Activated T-helper 1 cell treated with anti-CD3 and anti-CD28 coated beads, Interleukin-12 subunit alpha, Interleukin-12 subunit beta, Interleukin-2, Interleukin-4 antibody, amounts not matched to agents 30 ng/mL and 10 ng/mL and 1 ng/mL, durations not matched to agents 14 hours and 24 hours and 36 hours (primary cell): ENCODE measurements at regions of chr2 and their contacts with region 1.

Region 1: GRCh38 chr2:181104512-181105115 is 124.2 kb downstream of the UBE2E3 start:
- DNase-seq: no peak
- H3K4me3 Mint-ChIP-seq: no peak overlapping the region
- H3K27ac Mint-ChIP-seq: peak overlapping the region; percentile 49
- H3K4me1 Mint-ChIP-seq: peaks cover 50% of the 10 kb centered on the region
- H3K27me3 Mint-ChIP-seq: no peaks in the 10 kb centered on the region

Region 2: GRCh38 chr2:181123798-181124231 is 19.2 kb after region 1 on chr2:
- intact Hi-C with region 1: loop called (anchors 1 kb)
- DNase-seq: peak; percentile 73
- H3K4me3 Mint-ChIP-seq: peak overlapping the region; percentile 78
- H3K27ac Mint-ChIP-seq: peak overlapping the region; percentile 95
- H3K4me1 Mint-ChIP-seq: peaks cover 74% of the 10 kb centered on the region
- H3K27me3 Mint-ChIP-seq: no peaks in the 10 kb centered on the region

Region 3: DNA sequence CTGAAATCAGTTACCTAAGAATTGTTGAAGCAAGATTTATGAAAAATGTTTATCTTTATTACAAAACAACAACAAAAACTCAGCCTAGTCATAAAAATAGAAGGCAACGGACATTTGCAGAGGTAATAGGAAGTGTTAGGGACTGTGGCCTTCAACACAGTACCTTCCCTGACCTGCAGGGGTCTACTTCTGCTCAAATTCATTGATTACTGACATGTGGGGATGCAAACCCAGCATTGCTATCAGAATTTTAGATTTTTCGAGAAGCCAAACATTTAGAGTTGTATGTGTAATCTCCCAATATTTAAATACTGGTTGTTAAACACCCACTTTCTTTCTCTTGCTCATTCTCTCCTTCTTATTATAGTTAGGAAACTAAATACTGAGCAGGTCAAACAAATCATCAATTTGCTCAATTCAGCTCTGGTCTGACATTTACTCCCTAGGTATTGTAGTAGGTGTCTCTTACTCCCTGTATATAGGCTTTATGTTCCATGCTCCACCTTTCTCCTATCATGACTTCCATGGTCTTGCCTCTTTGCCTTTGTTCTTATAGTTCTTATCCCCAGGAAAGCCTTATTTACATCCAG is 74.3 kb after region 1 on chr2:
- intact Hi-C with region 1: loop called (anchors 1 kb)
- DNase-seq: no peak
- H3K4me3 Mint-ChIP-seq: peak overlapping the region; percentile 7
- H3K27ac Mint-ChIP-seq: peak overlapping the region; percentile 57
- H3K4me1 Mint-ChIP-seq: peaks cover 56% of the 10 kb centered on the region
- H3K27me3 Mint-ChIP-seq: no peaks in the 10 kb centered on the region

Region 4: DNA sequence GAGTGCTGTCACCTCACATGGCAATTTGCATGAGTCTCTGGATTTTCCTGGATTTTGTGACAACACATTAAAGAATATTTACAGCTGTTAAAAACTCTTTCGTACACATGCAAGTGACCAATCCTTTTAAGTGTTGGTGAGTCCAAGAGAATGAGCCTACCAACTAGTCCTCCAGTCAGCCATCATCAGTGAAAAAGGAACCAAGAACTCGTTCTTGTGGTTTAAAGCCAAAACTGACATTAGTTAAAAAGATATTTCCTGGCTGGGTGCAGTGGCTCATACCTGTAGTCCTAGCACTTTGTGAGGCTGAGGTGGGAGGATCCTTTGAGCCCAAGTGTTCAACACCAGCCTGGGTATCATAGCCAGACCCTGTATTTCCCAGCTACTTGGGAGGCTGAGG is 137.2 kb after region 1 on chr2:
- intact Hi-C with region 1: no loop called
- DNase-seq: no peak
- H3K4me3 Mint-ChIP-seq: no peak overlapping the region
- H3K27ac Mint-ChIP-seq: no peak overlapping the region
- H3K4me1 Mint-ChIP-seq: peaks cover 30% of the 10 kb centered on the region
- H3K27me3 Mint-ChIP-seq: no peaks in the 10 kb centered on the region

Region 5: DNA sequence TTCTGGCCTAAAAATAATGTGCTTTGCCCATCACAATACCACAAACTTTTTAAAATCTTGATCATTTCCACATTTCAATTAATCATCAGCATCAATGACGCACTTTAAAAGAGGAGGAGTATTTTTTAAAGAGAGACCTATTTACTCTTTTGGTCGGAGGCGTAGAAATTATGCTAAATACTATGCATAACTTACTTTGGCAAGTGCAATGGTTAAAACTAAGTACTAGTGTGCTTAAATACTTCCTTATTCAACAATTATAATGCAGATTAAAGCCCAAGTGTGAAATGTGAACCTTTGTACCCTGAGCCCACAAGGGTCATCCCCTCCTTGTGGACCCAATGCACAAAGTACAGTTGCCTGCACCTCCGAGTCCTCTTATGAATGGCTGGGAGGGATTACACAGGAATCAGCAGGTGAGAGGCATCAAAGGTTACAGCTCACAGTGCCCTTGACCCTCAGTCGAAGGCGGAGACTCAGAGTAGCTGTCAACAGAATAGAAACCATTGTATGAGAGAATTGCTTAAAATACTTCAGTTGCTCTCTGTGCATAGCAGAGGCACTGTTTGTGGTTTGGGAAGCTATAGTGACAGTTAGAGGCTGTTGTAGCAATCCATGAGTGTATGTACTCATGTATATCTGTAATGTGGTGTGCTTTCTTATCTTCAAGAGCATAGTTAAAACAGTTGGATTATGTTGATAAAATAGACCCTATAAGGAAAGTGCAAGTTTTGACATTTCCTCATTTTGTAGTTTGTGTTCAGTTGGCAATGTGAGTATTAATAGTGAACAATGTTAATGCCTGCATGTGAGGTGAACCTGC is 200.9 kb after region 1 on chr2:
- intact Hi-C with region 1: loop called (anchors 1 kb)
- DNase-seq: peak; percentile 62
- H3K4me3 Mint-ChIP-seq: peak overlapping the region; percentile 74
- H3K27ac Mint-ChIP-seq: peak overlapping the region; percentile 96
- H3K4me1 Mint-ChIP-seq: peaks cover 84% of the 10 kb centered on the region
- H3K27me3 Mint-ChIP-seq: no peaks in the 10 kb centered on the region

Region 6: DNA sequence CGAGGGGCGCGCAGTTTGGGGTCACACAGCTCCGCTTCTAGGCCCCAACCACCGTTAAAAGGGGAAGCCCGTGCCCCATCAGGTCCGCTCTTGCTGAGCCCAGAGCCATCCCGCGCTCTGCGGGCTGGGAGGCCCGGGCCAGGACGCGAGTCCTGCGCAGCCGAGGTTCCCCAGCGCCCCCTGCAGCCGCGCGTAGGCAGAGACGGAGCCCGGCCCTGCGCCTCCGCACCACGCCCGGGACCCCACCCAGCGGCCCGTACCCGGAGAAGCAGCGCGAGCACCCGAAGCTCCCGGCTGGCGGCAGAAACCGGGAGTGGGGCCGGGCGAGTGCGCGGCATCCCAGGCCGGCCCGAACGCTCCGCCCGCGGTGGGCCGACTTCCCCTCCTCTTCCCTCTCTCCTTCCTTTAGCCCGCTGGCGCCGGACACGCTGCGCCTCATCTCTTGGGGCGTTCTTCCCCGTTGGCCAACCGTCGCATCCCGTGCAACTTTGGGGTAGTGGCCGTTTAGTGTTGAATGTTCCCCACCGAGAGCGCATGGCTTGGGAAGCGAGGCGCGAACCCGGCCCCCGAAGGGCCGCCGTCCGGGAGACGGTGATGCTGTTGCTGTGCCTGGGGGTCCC is 352.6 kb after region 1 on chr2 and contains the start of gene ITGA4:
- intact Hi-C with region 1: loop called (anchors 1 kb)
- DNase-seq: peak; percentile 85
- H3K4me3 Mint-ChIP-seq: peak within 1 kb of the TSS; percentile 98
- H3K27ac Mint-ChIP-seq: peak within 1 kb of the TSS; percentile 96
- H3K4me1 Mint-ChIP-seq: peaks cover 75% of the 10 kb centered on the region
- H3K27me3 Mint-ChIP-seq: no peaks in the 10 kb centered on the region
- total RNA-seq, gene ITGA4: 98.5 and 118 TPM in 2 replicates

Region 7: GRCh38 chr2:181790716-181791649 is 686.4 kb after region 1 on chr2:
- intact Hi-C with region 1: loop called (anchors 1 kb)
- DNase-seq: peak; percentile 3
- H3K4me3 Mint-ChIP-seq: no peak overlapping the region
- H3K27ac Mint-ChIP-seq: peak overlapping the region; percentile 38
- H3K4me1 Mint-ChIP-seq: peaks cover 33% of the 10 kb centered on the region
- H3K27me3 Mint-ChIP-seq: no peaks in the 10 kb centered on the region